CD8-positive, alpha-beta memory T cell (primary cell): ENCODE measurements at regions of chr19 and their contacts with region 1.

Region 1: GRCh38 chr19:45692187-45693105 is at the start of gene QPCTL:
- DNase-seq: peak; percentile 94 to 98 (median 98)
- H3K4me3 ChIP-seq: peak within 1 kb of the TSS; percentile 72
- H3K4me3 Mint-ChIP-seq: peak within 1 kb of the TSS; percentile 91 to 98 (median 93)
- H3K27ac ChIP-seq: peak within 1 kb of the TSS; percentile 92
- H3K27ac Mint-ChIP-seq: peak within 1 kb of the TSS; percentile 92 to 100 (median 97)
- H3K4me1 ChIP-seq: peaks cover 7% of the 10 kb centered on the region
- H3K4me1 Mint-ChIP-seq: peaks cover 16 to 27% (median 19%) of the 10 kb centered on the region in 3 donors
- H3K27me3 ChIP-seq: no peaks in the 10 kb centered on the region
- H3K27me3 Mint-ChIP-seq: no peaks in the 10 kb centered on the region
- total RNA-seq, gene QPCTL: 11.3 to 11.5 TPM

Region 2: GRCh38 chr19:45705115-45705514 is 12.7 kb after region 1 on chr19:
- CTCF ChIA-PET with region 1: interaction called, 14 read pairs
- POLR2A ChIA-PET with region 1: no interaction called
- DNase-seq: no peak
- H3K4me3 ChIP-seq: no peak overlapping the region
- H3K4me3 Mint-ChIP-seq: no peak overlapping the region
- H3K27ac ChIP-seq: no peak overlapping the region
- H3K27ac Mint-ChIP-seq: no peak overlapping the region
- H3K4me1 ChIP-seq: no peaks in the 10 kb centered on the region
- H3K4me1 Mint-ChIP-seq: peaks cover 1 to 4% (median 3%) of the 10 kb centered on the region in 3 donors
- H3K27me3 ChIP-seq: no peaks in the 10 kb centered on the region
- H3K27me3 Mint-ChIP-seq: no peaks in the 10 kb centered on the region

Region 3: GRCh38 chr19:45761714-45762113 is 69.3 kb after region 1 on chr19:
- CTCF ChIA-PET with region 1: no interaction called
- POLR2A ChIA-PET with region 1: no interaction called
- DNase-seq: no peak
- H3K4me3 ChIP-seq: no peak overlapping the region
- H3K4me3 Mint-ChIP-seq: no peak overlapping the region
- H3K27ac ChIP-seq: no peak overlapping the region
- H3K27ac Mint-ChIP-seq: no peak overlapping the region
- H3K4me1 ChIP-seq: no peaks in the 10 kb centered on the region
- H3K4me1 Mint-ChIP-seq: no peaks in the 10 kb centered on the region
- H3K27me3 ChIP-seq: no peaks in the 10 kb centered on the region
- H3K27me3 Mint-ChIP-seq: peaks cover 10 to 12% of the 10 kb centered on the region in 2 donors